ENCODE measurements at regions of chr15 and their contacts with region 1.

Region 1: DNA sequence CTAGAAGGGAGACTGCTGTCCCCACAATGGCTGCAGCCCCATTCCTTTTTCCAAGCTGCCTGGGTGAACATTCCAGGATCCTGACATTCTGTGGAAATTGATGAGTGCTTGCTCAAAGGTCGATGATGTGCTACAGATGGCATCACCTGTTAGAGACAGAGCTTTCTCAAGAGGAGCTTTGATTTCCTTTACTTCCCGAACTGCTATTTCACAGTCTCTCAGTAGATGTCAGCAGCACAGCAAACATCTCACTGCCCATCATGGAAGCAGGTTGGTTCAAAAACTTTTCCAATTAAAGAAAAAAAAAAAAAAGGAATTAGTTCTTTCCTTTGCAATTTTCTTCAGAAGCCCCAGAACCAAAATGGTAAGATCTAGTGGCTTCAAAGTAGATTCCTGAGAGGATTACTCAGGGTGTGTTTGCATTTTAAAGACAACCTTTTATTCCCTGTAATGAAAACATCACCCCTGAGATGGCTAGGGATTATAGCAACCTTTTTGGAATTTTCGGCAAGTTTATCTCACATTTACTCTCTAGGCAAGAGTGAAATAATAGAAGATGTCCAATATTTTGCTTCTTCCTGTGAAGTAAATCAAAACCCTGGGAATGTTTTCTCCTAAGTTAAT is 44.8 kb downstream of the POLR2M start:
- DNase-seq: no peak
- ATAC-seq: no peak
- H3K4me3 ChIP-seq: no peak overlapping the region
- H3K27ac ChIP-seq: no peak overlapping the region
- H3K4me1 ChIP-seq: no peaks in the 10 kb centered on the region
- H3K27me3 ChIP-seq: no peaks in the 10 kb centered on the region

Region 2: GRCh38 chr15:57647791-57648130 is 103.5 kb before region 1 on chr15:
- intact Hi-C with region 1: no loop called
- DNase-seq: no peak
- ATAC-seq: no peak
- H3K4me3 ChIP-seq: no peak overlapping the region
- H3K27ac ChIP-seq: no peak overlapping the region
- H3K4me1 ChIP-seq: peaks cover 0 to 1% of the 10 kb centered on the region in 2 donors
- H3K27me3 ChIP-seq: no peaks in the 10 kb centered on the region

Region 3: DNA sequence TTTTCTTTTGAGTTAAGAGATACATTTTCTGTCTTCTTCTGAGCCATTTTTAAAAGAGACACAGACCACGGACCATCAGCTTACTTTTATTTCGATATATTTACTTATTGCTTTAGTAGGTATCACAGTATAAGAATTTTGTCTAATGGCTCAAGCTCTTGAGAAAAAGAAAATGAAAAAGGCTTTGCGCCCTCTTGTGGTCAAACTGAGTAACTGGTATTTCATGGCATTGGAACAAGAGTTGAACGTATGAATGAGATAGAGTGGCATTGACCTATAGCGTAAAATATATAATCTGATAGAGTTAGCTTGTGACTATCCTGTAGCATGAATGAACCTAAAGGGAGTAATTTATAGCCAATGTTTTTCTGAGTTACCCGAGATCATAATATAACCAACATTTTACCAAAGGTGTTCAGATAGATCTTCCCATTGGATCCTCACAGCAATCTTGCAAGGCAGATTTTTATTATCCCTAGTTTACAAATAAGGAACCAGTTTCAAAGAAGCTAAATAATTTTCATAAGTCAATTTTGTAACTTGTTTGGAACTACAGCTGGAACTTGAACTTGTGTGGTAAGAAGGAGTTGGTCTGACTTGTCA is 109.8 kb after region 1 on chr15:
- intact Hi-C with region 1: loop called (anchors 1 to 10 kb)
- DNase-seq: no peak
- ATAC-seq: peak; percentile 71
- H3K4me3 ChIP-seq: no peak overlapping the region
- H3K27ac ChIP-seq: no peak overlapping the region
- H3K4me1 ChIP-seq: no peaks in the 10 kb centered on the region
- H3K27me3 ChIP-seq: no peaks in the 10 kb centered on the region

Region 4: DNA sequence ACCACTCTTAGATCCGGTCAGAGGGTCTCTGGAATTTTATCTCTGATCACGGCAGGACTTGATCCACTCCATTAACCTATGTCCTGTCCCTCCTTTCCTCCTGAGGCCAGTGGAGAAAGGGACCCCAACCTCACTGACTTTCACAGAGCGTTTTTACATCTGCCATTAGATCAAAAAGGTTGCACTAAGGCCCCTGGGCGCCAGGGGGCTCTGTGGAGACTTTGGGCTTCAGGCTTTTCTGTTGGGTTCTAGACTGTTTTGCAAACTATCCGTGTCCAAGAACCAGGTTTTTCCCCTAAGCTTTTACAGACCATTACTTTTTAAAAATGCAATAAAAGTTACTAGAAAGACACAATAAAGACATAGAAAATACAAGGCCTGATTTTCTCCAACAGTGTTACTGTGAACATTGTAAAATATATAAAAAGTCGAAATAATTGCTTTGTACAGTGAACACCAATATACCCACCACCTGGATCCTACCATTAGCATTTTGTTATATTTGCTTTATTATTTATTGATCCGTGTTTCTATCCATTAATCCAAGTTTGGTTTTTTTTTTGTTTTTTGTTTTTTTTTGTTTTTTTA is 115.0 kb after region 1 on chr15:
- intact Hi-C with region 1: loop called (anchors 1 to 10 kb)
- DNase-seq: peak; percentile 53 to 81
- ATAC-seq: peak; percentile 62
- H3K4me3 ChIP-seq: no peak overlapping the region
- H3K27ac ChIP-seq: no peak overlapping the region
- H3K4me1 ChIP-seq: no peaks in the 10 kb centered on the region
- H3K27me3 ChIP-seq: no peaks in the 10 kb centered on the region

Measured in aorta (tissue), 5 donors.